WTC11 (cell line): ENCODE measurements at regions of chr12 and their contacts with region 1.

Region 1: DNA sequence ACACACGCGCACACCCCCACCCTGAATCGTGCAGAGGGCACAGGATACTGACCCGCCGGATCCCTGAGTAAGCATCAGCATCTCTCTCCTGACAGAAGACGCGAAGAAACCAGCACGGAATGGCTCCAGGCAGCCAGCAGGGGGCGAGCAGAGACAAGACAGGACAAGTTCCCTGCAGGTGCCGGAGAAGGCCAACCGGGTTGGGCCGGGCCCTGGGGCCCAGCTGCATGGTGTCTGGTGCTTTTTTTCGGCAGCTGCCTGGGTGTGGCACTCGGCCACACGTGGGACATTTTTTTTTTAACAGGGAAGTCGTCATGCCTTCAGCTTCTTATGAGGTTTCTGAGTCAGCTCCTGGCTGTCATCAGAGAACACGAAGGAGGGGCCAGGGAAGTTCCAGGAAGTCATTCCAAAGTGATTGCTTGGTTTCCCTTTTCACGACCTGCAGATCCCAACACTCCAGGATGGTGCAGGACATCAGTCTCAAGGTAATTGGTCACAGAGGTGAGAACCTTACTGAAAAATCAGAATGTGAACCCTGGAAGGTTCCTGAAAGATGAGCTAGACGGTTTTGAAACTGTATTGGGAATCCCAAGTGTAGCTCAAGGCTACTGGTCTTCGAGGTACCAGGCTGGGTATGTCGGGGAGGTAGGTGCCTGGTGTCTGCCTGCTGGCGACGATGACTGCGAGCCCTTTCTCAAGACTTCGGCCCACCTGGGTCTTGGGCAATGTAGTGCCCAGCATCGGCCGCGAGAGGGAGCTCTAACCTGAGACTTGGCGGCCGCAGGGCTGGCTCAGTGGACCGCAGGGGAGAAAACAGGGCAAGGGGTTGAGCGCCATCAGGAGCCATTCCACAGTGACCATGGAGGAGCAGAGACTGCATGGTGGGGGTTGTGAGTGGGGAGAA is 190.8 kb upstream of the PRMT8 start:
- DNase-seq: peak; percentile 94
- ATAC-seq: peak; percentile 71
- H3K4me3 Mint-ChIP-seq: peak overlapping the region; percentile 50
- H3K27ac Mint-ChIP-seq: no peak overlapping the region; the same call in 1 of the 2 replicates
- H3K4me1 Mint-ChIP-seq: peaks cover 12% of the 10 kb centered on the region
- H3K27me3 Mint-ChIP-seq: no peaks in the 10 kb centered on the region; the same call in 1 of the 2 replicates
- CTCF ChIP-seq: peak; percentile 95

Region 2: GRCh38 chr12:3141339-3142321 is 158.6 kb before region 1 on chr12:
- CTCF ChIA-PET with region 1: interaction called, 13 read pairs
- POLR2A ChIA-PET with region 1: no interaction called
- DNase-seq: no peak
- ATAC-seq: peak; percentile 55
- H3K4me3 Mint-ChIP-seq: no peak overlapping the region
- H3K27ac Mint-ChIP-seq: peak overlapping the region; percentile 54
- H3K4me1 Mint-ChIP-seq: peaks cover 37% of the 10 kb centered on the region
- H3K27me3 Mint-ChIP-seq: no peaks in the 10 kb centered on the region
- CTCF ChIP-seq: no peak

Region 3: GRCh38 chr12:3275171-3276041 is 24.8 kb before region 1 on chr12:
- CTCF ChIA-PET with region 1: interaction called, 41 read pairs
- POLR2A ChIA-PET with region 1: no interaction called
- DNase-seq: peak; percentile 88
- ATAC-seq: peak; percentile 79
- H3K4me3 Mint-ChIP-seq: peak overlapping the region; percentile 59
- H3K27ac Mint-ChIP-seq: no peak overlapping the region
- H3K4me1 Mint-ChIP-seq: peaks cover 20% of the 10 kb centered on the region
- H3K27me3 Mint-ChIP-seq: no peaks in the 10 kb centered on the region
- CTCF ChIP-seq: peak; percentile 97

Region 4: DNA sequence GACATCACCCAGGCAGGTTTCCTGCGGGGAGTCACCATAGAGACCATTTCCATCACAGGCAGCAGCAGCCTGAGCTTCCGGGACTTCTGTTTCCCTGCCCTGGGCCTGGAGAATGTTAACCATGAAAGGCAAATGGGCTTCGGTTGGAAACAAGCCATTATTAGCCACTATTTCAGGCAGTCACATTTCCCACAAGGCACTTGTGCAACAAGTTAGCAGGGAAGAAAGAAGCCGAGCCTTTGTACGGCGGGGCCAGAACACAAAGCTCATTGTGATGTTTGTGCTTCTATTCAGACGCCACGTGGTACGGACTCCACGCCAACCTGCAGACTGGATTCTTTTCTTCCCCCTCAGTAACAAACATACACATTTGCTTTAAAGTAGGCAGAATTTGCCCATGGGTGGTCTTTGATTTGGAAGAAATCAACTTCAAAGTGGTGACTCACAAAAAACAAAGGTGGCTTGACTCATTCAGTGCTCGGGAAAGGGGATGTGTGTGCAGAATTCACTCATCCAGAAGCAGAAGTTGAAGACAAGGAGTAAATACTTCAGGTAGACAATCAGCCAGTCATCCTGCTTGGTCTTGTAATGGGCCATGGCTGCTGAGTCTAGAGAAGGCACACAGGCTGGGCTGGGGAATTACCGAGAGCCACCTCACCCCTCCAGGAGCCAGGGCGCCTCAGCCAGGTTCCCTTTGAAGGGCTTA is 36.6 kb after region 1 on chr12:
- CTCF ChIA-PET with region 1: interaction called, 21 read pairs
- POLR2A ChIA-PET with region 1: no interaction called
- DNase-seq: no peak
- ATAC-seq: peak; percentile 27; the same call in 1 of the 2 replicates
- H3K4me3 Mint-ChIP-seq: no peak overlapping the region
- H3K27ac Mint-ChIP-seq: no peak overlapping the region
- H3K4me1 Mint-ChIP-seq: peaks cover 22% of the 10 kb centered on the region
- H3K27me3 Mint-ChIP-seq: no peaks in the 10 kb centered on the region; the same call in 1 of the 2 replicates
- CTCF ChIP-seq: no peak

Region 5: DNA sequence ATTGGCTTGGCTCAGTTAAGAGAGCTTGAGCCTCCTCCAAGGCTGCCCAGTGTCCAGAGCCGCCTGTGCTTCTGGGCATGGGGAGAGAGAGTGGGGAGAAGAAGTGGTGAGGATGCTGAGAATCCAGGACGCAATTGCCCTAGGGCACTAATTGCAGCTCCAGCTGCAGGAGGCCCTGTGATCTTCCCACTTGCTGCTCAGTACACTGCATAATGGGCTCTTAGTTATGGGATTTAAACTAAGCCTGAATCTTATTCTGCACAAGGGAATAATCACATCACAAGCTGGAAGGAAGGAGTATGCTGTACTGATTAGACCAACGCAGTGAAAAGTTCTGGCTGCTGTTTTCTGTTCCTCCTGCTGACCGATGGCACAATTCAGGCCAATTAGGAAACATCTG is 89.8 kb after region 1 on chr12:
- CTCF ChIA-PET with region 1: no interaction called
- POLR2A ChIA-PET with region 1: no interaction called
- DNase-seq: no peak
- ATAC-seq: no peak
- H3K4me3 Mint-ChIP-seq: no peak overlapping the region
- H3K27ac Mint-ChIP-seq: no peak overlapping the region
- H3K4me1 Mint-ChIP-seq: no peaks in the 10 kb centered on the region
- H3K27me3 Mint-ChIP-seq: peaks cover 3% of the 10 kb centered on the region; the same call in 1 of the 2 replicates
- CTCF ChIP-seq: no peak

Region 6: DNA sequence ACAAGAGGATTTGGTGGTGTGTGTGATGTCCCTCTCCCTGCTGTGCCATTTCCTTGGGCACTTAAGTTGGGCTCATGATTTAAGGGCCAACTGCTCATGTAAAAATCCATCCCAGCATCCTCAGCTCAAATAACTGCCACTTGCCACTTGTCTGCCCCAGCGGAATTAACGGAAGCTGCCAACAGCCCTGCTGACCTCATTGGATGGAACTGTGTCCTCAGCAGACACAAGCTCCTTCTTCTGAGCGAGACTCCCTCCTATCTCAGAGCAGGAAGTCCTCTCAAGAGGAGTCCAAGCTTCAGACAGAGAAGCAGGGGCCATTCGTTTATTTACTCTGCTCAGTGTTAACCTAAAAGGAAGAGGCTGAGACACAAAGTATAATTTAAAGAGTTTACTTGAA is 161.2 kb after region 1 on chr12:
- CTCF ChIA-PET with region 1: interaction called, 37 read pairs
- POLR2A ChIA-PET with region 1: no interaction called
- DNase-seq: no peak
- ATAC-seq: no peak
- H3K4me3 Mint-ChIP-seq: no peak overlapping the region
- H3K27ac Mint-ChIP-seq: no peak overlapping the region
- H3K4me1 Mint-ChIP-seq: peaks cover 17% of the 10 kb centered on the region
- H3K27me3 Mint-ChIP-seq: no peaks in the 10 kb centered on the region; the same call in 1 of the 2 replicates
- CTCF ChIP-seq: no peak

Region 7: DNA sequence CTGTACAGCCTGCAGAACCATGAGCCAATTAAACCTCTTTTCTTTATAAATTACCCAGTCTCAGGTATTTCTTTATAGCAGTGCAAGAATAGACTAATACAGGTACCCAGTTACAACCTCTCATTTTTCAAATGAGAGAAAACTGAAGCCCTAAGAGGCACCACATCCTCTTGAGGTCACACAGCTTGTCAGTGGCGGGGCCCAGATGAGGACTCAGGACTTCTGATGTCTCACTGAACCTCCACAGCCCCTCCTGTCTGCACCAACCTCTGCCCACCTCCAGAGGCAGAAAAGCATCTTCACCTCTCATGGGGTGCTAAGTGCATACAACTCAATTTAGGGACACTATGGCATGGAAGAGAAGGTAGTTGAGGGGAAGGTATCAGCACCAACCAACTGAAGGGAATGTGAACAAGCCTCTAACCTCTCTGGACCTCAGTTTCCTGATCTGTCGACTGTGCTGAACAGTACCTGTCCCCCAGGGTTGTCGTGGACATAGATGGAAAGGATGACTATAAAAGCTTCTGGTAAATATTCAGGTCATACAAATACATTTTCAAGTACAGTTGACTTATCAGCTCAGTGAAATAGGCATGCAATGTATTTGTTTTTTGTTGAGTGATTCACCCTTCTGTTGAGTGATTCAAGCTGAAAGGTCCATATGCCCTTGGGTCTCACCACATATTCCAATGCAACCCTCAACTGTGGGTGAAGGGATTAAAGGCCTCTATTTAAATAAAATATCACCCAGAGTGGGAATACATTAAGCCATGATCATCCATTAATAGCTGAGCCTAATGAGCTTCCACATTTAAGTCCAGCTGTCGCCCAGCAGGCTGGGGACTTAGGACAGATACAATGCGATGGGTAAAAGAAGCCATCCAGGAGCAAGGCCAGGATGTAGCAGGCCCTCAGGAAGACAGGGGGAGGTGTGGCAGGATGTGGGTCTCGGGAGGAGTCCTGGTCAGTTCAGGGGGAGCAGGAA is 332.4 kb after region 1 on chr12:
- CTCF ChIA-PET with region 1: interaction called, 11 read pairs
- POLR2A ChIA-PET with region 1: no interaction called
- DNase-seq: no peak
- ATAC-seq: no peak
- H3K4me3 Mint-ChIP-seq: no peak overlapping the region
- H3K27ac Mint-ChIP-seq: no peak overlapping the region
- H3K4me1 Mint-ChIP-seq: peaks cover 22% of the 10 kb centered on the region
- H3K27me3 Mint-ChIP-seq: peaks cover 3% of the 10 kb centered on the region; the same call in 1 of the 2 replicates
- CTCF ChIP-seq: no peak

Region 8: DNA sequence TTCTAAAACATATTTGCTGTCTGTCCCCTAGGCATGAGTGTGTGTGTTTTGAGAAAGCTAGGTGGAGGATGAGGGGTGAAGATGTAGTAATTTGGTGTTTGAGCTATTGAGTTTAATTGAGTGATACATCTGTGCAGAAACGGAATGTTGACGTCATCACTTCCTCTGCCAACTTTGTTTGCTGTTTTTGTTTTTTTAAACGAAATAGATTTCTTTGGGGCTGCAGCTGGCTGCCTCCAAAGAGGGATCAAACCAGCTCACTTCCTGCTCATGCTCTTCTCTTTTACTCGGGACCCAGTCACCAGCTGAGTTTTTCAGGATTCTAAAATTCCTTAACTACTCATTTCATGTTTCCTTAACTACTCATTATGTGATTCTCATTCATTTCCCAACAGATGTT is 472.2 kb after region 1 on chr12:
- CTCF ChIA-PET with region 1: interaction called, 17 read pairs
- POLR2A ChIA-PET with region 1: no interaction called
- DNase-seq: no peak
- ATAC-seq: no peak
- H3K4me3 Mint-ChIP-seq: no peak overlapping the region
- H3K27ac Mint-ChIP-seq: no peak overlapping the region
- H3K4me1 Mint-ChIP-seq: peaks cover 10% of the 10 kb centered on the region; the same call in 1 of the 2 replicates
- H3K27me3 Mint-ChIP-seq: no peaks in the 10 kb centered on the region; the same call in 1 of the 2 replicates
- CTCF ChIP-seq: no peak